Activated T-helper 1 cell treated with anti-CD3 and anti-CD28 coated beads, Interleukin-12 subunit alpha, Interleukin-12 subunit beta, Interleukin-2, Interleukin-4 antibody, amounts not matched to agents 30 ng/mL and 10 ng/mL and 1 ng/mL, durations not matched to agents 14 hours and 24 hours and 36 hours (primary cell): ENCODE measurements at regions of chr17 and their contacts with region 1.

Region 1: DNA sequence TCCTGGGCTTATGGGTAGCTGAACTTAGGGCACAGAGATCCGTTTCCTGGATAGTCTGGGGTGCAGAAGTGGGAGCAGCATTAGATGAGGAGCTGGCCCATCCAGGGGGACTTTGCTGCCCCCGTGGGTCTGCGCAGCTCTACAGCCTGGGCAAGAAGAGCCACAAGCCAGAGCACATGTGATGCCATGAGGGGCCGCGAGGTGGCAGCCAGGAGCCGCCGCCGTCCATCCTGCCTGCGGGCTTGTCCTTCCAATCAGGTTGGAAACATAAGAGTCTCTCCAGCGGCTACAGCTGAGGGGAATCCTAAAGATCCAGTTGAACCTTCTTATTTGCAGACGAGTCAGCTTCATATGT is 21.9 kb downstream of the C1QTNF1 start:
- DNase-seq: peak; percentile 41
- H3K4me3 Mint-ChIP-seq: no peak overlapping the region
- H3K27ac Mint-ChIP-seq: no peak overlapping the region
- H3K4me1 Mint-ChIP-seq: no peaks in the 10 kb centered on the region
- H3K27me3 Mint-ChIP-seq: no peaks in the 10 kb centered on the region

Region 2: DNA sequence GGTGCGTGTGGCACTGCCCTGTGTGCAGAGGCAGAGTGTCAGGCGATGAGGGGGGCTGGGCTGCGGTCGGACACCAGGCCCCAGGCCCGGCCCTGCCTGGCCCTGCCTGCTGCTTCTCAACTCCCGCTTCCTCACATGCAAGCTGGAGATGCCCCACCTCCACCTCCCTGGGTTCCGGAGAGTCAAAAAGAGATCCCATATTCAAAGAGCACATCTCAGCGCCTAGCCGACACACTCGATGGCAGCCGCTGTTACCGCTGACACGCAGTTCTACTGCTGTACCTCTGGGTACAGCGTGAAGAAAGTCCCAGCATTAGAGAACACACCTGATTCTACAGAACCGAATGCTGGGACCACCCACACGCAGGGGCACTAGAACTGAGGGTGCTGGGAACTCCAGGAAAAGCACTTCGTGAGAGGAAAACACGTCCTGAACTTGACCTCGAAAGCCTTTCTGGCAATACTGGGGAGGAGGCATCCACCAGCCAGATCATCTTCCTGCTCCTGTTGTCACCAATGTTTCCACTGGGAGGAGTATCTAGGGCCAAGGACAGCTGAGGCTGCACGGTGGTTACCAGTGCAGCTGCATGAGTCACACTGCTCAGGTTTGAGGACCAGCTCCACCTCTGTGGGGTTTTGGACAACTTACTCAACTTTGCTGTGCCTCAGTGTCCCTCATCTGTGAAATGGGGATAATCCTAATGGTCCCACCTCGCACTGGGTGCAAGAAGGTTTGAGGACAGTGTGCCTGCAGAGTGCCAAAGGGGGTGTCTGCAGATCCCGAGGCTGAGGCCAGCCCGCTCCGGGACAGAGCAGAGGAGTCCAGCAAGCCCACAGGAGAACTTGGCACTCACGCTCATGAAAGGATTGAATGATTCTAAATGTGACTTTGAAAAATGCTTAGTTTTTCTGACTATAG is 368.3 kb before region 1 on chr17:
- intact Hi-C with region 1: no loop called
- DNase-seq: no peak
- H3K4me3 Mint-ChIP-seq: no peak overlapping the region
- H3K27ac Mint-ChIP-seq: no peak overlapping the region
- H3K4me1 Mint-ChIP-seq: no peaks in the 10 kb centered on the region
- H3K27me3 Mint-ChIP-seq: no peaks in the 10 kb centered on the region

Region 3: DNA sequence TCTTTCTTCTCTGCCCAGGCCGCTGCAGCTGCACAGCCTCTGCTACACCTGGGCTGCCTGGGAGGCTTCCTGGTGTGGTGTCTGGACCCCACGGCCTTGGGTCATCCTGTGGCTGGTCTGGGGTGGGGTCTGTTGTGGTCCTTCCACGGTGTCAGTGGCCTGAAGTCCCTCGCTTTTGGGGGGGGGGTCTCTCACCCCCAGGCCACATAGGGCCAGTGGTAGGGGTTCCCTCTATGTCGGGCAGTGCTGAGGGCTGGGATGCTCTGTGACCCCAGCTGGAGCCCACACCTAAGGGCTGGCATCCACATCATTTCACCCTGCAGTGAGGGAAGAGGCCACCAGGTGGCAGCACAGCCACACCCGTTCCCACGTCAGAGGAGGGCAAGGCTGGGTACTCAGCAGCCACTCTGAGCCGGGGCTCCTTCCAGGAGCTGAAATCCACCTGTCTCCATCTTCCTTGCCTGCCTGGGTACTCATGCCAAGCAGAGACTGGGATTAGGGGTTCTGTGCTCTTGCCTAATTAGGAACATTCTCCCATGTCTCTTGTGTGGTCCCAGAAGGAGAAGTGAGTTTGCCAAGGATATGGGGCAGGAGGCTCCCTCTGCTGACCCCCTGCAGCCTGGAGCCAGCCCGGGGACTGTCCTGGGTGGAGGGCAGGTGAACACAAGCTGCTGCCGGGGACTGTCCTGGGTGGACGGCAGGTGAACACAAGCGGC is 41.8 kb after region 1 on chr17:
- intact Hi-C with region 1: loop called (anchors 2 kb)
- DNase-seq: peak; percentile 53
- H3K4me3 Mint-ChIP-seq: no peak overlapping the region
- H3K27ac Mint-ChIP-seq: no peak overlapping the region
- H3K4me1 Mint-ChIP-seq: no peaks in the 10 kb centered on the region
- H3K27me3 Mint-ChIP-seq: peaks cover 2% of the 10 kb centered on the region

Region 4: DNA sequence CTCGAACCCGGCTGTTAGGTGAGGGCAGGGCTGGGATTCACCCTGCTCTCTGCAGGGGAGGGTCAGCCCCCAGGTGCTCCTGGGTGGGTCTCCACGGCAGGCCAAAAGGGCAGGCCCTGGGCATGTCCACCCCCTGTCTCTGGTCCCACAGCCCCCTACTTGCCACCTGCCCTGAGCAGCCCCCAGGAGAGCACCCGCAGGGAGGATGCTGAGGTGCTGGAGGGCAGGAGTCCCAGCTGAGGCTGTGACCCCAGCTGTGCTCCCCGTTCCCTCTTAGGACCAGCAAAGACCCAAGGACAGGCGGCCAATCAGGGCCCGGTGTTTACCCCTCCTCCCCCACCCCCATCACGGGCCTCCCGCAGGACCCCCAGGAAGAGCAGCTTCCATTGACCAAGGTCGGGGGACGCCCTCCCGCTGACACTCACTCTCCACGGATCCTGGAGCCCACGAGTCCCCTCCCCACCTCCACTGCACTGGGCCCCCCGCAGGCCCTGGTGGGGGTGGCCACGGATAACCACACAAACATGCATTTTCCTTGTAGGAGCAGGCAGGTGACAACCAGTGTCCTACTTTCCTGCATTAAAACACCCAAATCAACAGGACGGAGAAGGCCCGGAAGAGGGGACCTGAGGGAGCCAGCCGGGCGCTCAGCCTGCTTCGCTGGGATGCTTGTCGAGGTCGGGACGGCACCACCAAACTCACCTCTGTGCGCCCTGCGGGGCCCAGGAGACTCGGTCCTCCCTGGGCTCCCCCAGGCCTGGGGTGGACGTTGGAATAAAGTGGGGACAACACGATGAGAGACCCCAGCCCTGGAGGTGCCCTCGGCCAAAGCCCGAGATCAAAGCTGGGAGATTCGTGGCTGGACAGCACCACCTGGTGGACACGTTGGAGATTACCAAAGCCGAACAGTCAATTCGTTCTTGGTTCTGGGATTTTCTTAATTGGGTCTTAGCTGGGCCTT is 662.4 kb after region 1 on chr17:
- intact Hi-C with region 1: loop called (anchors 5 kb)
- DNase-seq: peak; percentile 38
- H3K4me3 Mint-ChIP-seq: no peak overlapping the region
- H3K27ac Mint-ChIP-seq: no peak overlapping the region
- H3K4me1 Mint-ChIP-seq: no peaks in the 10 kb centered on the region
- H3K27me3 Mint-ChIP-seq: no peaks in the 10 kb centered on the region